Activated CD4-positive, alpha-beta T cell treated with anti-CD3 and anti-CD28 coated beads, Interleukin-2, amount 10 ng/mL, durations not matched to agents 24 days and 14 days (primary cell): ENCODE measurements at regions of chr7 and their contacts with region 1.

Region 1: DNA sequence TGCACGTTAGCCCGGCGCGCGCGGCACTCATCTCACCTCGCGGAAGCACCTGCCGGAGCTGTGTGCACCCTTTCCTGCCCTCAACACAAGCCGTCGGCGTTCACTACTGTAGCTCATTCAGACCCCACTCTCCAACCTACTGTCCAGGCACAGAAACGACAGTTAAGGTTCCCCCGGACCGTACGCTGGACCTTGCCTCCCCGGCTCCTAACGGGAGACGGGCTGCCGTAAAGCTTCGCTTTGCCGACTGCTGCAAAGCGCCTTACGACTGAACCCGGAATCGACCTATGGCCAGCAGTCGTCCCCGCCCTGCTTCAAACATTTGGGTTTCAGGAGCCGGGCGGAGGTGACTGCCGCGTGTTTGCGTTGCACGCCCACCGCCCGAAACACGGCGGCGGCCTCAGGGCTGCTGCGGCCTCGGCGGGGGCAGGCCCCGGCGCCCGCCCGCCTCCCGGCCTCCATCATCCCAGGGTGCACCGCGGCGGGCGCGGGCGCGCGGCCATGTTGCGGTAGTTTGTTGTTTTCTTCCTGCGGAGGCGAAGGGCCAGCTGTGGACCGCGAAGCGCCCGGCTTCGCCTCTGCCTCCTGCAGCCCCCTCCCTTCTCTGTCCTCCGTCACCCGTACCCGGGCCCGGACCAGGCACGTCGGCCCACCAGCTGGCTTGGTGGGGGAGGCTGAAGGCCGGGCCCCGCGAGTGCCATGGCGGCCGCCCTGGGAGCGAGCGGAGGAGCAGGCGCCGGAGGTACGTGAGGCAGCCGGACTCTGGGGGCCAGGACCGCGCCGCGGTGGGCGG is at the start of gene RBM33:
- DNase-seq: peak; percentile 95
- H3K4me3 Mint-ChIP-seq: peak within 1 kb of the TSS; percentile 92
- H3K27ac Mint-ChIP-seq: peak within 1 kb of the TSS; percentile 97
- H3K4me1 Mint-ChIP-seq: peaks cover 34% of the 10 kb centered on the region
- H3K27me3 Mint-ChIP-seq: no peaks in the 10 kb centered on the region
- total RNA-seq, gene RBM33: 77.2 and 79.5 TPM in 2 replicates

Region 2: GRCh38 chr7:155205368-155206317 is 438.7 kb before region 1 on chr7:
- intact Hi-C with region 1: loop called (anchors 1 kb)
- DNase-seq: peak; percentile 96
- H3K4me3 Mint-ChIP-seq: peak overlapping the region; percentile 85
- H3K27ac Mint-ChIP-seq: peak overlapping the region; percentile 96
- H3K4me1 Mint-ChIP-seq: peaks cover 34% of the 10 kb centered on the region
- H3K27me3 Mint-ChIP-seq: no peaks in the 10 kb centered on the region

Region 3: DNA sequence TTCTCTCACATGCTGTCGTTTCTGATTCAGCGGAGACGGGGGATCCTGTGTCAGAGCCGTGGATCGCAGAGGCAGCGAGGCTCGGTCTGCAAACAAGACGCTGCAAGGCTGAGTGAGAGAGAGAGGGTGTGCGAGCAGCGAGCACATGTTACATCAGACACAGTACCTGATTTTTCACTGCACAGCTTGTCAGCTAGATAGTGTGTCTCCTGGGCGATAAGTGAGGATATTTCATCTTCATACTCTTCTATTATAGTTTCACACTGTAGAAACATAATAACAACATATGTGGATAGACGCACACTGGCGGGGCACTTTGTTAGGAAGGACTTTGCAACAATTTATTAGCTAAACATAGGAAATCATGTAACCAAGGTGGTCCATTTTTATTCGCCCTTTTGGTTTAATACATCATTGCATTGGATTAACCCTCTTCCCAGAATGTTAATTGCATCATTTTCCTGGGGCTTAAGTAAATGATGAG is 137.5 kb before region 1 on chr7:
- intact Hi-C with region 1: no loop called
- DNase-seq: no peak
- H3K4me3 Mint-ChIP-seq: no peak overlapping the region
- H3K27ac Mint-ChIP-seq: peak overlapping the region; percentile 53
- H3K4me1 Mint-ChIP-seq: peaks cover 15% of the 10 kb centered on the region
- H3K27me3 Mint-ChIP-seq: peaks cover 88% of the 10 kb centered on the region

Region 4: DNA sequence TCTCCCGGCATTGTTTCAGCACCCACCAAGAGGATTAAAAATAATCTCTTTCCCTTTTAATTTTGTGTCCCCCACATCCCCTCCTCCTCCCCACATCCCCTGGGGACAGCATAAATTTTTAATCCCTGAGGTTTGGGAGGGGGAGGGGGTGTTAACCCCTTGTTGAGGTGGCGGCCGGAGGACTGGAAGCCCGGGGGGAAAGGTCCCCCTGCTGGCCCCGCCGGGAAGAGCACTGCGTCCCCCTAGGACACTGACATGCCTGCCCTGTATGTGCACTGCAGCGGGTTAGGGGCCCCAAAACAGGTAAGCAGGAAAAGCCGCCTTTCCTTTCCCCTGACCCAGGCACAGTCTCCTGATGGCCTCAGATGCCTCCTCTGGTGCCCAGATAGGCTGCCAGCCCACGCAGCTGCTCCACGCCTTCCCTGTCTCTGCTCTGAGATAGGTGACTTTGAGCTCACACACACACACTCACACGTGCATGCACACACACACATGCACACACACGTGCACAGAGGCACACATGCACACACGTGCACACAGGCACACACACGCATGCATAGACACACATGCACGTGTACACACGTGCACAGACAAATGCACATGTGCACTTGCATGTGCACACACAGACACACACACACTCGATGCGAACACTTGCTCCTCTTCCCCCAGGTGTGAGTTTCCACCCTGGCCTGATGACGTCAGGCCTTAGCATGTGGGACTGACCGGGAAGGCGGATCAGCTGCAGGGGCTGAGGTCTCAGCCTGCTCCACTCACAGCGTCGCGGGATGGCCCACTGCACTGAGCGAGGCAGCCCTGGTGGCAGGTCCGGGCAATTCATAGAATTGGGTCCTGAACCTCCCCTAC is 110.3 kb before region 1 on chr7:
- intact Hi-C with region 1: no loop called
- DNase-seq: peak; percentile 72
- H3K4me3 Mint-ChIP-seq: no peak overlapping the region
- H3K27ac Mint-ChIP-seq: no peak overlapping the region
- H3K4me1 Mint-ChIP-seq: peaks cover 7% of the 10 kb centered on the region
- H3K27me3 Mint-ChIP-seq: peaks cover 69% of the 10 kb centered on the region

Region 5: DNA sequence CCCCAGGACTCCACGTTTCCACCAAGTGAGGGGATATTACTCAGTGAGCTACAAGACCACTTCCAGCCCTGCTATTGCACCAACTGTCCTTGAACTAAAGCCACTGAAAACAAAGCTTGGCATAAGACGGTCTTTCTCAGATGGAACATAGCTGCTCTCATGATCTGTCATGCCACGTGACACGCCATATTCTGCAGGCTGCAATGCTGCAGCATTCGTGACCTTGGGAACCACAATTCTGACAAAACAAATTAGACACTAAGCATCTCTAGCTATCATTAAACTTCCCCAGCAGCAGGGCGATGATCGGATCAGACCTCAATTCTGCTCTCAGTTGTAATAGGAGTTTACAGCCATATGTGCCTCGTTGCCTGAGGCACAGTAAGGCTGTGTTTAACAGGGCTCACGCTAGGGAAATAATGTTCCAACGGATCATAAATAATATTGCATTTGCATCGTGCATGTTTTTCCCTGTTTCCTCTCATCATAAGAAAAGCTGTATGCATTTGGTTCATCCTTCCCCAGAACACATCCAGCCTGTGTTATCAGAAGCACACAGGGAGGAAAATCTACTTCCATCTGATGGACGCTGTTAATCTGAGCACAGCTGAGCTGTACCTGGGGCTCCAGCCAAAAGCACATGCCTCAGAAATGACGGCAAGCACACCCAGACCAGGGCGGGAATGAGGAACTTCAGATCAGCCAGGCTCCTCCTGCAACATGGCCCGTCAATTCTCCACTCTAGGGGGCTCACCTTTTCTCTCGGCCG is 59.4 kb before region 1 on chr7:
- intact Hi-C with region 1: no loop called
- DNase-seq: no peak
- H3K4me3 Mint-ChIP-seq: no peak overlapping the region
- H3K27ac Mint-ChIP-seq: no peak overlapping the region
- H3K4me1 Mint-ChIP-seq: peaks cover 4% of the 10 kb centered on the region
- H3K27me3 Mint-ChIP-seq: peaks cover 39% of the 10 kb centered on the region

Region 6: DNA sequence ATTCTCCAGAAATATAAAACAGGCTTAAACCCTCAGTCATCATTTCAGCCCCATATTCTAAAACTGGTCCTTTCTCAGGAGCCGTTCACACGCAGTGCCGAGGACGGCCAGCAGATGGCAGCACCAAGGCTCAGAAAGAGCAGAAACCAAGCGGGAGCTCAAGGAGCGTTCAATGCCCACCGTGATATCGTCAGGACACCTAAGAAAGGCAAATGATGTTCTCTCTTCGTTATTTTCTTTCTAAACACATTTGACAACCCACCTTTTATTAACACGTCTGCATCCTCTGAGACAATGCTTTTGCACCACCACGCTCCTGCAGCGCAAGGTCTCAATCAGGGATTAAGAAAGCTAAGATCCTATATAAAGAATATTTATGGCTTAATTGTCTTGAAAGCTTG is 45.6 kb before region 1 on chr7:
- intact Hi-C with region 1: loop called (anchors 5 kb)
- DNase-seq: peak; percentile 96
- H3K4me3 Mint-ChIP-seq: no peak overlapping the region
- H3K27ac Mint-ChIP-seq: no peak overlapping the region
- H3K4me1 Mint-ChIP-seq: peaks cover 12% of the 10 kb centered on the region
- H3K27me3 Mint-ChIP-seq: peaks cover 38% of the 10 kb centered on the region

Region 7: GRCh38 chr7:155702616-155703015 is 58.2 kb after region 1 on chr7:
- intact Hi-C with region 1: loop called (anchors 5 kb)
- DNase-seq: no peak
- H3K4me3 Mint-ChIP-seq: no peak overlapping the region
- H3K27ac Mint-ChIP-seq: peak overlapping the region; percentile 56
- H3K4me1 Mint-ChIP-seq: peaks cover 22% of the 10 kb centered on the region
- H3K27me3 Mint-ChIP-seq: no peaks in the 10 kb centered on the region

Region 8: DNA sequence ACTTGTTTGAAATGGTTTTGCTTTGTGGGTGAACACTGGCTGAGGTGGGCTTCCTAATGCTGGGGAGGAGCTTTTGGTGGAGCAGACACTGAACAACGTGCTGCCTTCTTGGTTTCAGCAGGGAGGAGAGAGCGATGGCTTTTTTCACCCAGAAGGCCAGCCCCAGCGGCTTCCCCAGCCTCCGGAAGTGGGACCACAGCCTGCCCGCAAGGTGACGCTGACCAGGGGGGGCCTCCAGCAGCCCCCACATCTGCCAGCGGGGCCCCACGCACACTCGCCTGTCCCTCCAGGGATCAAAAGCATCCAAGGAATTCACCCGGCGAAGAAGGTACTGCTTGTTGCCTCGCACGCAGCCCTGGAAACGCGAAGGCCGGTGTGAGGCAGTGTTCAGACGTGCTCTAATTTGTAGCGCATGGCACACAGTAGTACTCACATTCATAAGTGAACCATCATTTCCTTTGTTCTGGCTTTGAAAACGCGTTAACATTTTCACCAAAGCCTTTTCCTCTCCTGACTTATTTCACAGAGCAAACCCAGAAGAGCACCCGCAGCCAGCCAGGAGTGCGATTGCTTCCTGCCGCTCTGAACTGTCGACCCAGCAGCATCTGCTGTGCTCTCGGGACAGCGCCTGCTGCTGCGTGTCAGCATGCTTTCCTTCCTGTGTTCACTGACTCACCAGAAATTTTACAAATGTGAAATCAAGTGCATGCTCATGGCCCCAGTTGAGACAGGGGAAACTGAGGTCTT is 119.5 kb after region 1 on chr7:
- intact Hi-C with region 1: loop called (anchors 1 kb)
- DNase-seq: peak; percentile 91
- H3K4me3 Mint-ChIP-seq: peak overlapping the region; percentile 83
- H3K27ac Mint-ChIP-seq: peak overlapping the region; percentile 99
- H3K4me1 Mint-ChIP-seq: peaks cover 67% of the 10 kb centered on the region
- H3K27me3 Mint-ChIP-seq: no peaks in the 10 kb centered on the region